ENCODE measurements at regions of chr6 and their contacts with region 1.

Region 1: DNA sequence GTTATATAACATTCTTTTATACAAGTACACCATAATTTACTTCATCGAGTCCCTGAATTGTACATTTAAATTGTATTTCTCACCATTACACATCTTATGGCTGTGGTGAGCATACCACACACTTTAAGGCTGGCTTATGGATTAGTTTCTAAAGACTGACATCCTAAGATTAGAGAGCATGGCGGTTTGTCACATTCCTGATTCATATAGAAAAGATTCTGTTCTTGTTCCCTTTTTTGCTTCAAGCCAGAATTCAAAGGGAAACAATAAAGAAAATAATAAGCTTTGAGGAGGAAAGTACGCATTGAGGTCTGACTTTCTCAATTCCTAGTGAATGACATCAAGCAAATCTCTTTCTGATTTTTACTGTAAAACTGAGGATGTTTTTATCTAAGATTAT is 2.5 kb downstream of the BTN1A1 start:
- DNase-seq: peak in 2 of 3 donors; percentile 28 to 35
- H3K4me3 ChIP-seq: no peak overlapping the region
- H3K27ac ChIP-seq: no peak overlapping the region
- H3K4me1 ChIP-seq: peaks cover 3 to 16% (median 13%) of the 10 kb centered on the region in 4 experiments
- H3K27me3 ChIP-seq: peaks cover 7 to 27% (median 13%) of the 10 kb centered on the region in 5 experiments

Region 2: DNA sequence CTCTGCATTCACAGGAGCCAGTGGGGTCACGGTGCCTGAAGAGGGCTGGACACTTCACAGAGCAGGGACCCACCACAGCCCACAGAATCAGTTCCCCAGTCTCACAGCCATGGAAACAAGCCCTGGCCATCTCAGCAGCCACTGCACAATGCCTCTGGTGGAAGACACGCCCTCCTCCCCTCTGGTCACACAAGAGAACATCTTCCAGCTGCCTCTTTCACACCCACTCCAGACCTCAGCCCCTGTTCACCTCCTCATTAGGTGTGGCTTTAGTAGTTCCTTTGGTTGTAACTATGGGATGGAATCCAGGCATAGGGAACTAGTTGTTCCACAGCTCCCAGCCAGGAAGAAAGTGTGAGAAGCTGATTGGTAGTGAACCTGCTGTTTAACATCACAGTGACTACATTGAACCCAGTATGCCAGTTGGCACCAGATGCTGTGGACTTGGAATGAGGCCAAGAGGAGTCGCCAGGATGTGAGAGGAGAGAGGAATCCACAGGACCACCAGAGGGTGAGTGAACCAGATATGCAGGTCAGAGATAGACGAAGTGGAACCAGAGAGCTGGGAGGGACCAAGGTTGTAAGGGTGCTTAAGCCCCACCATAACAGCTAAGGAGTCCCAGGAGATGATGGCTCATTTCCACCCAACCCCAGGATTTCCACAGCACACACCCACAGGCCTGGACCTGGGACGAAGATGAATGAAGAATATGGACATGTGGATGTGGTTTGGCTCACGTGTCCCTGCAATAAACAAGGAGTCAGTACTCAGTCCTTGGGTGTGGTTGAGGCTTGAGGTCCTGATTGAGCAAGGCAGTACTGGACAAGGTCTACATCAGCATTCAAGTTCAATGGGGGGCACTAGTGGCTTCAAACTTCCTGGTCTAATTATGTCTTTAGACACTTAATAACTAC is 71.1 kb before region 1 on chr6:
- CTCF ChIA-PET with region 1: no interaction called
- POLR2A ChIA-PET with region 1: no interaction called
- DNase-seq: no peak
- H3K4me3 ChIP-seq: no peak overlapping the region
- H3K27ac ChIP-seq: no peak overlapping the region
- H3K4me1 ChIP-seq: no peaks in the 10 kb centered on the region
- H3K27me3 ChIP-seq: no peaks in the 10 kb centered on the region

Region 3: DNA sequence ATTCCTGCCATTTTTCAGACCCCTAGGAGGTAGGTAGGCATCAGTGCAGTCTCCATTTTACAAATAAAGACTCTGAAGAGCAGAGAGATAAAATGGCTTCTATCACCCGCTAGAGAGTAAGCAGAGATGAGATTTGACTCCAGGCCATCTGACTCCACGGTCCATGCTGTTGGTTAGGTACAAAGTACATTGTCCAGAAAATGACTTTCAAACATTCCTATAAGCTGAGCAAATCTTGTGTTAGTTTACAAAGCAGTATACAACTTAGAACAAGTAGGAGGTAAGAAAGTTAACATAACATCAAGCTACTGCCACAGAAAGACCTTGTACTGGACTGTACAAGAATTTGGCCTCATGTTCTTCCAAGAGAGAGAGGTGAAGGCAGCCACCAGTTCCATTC is 12.4 kb after region 1 on chr6:
- CTCF ChIA-PET with region 1: interaction called, 11 read pairs
- POLR2A ChIA-PET with region 1: interaction called, 3 read pairs
- DNase-seq: no peak
- H3K4me3 ChIP-seq: no peak overlapping the region
- H3K27ac ChIP-seq: no peak overlapping the region
- H3K4me1 ChIP-seq: peaks cover 0 to under 1% (median 0%) of the 10 kb centered on the region in 4 experiments
- H3K27me3 ChIP-seq: no peaks in the 10 kb centered on the region